ENCODE measurements at regions of chr1 and their contacts with region 1.

Region 1: DNA sequence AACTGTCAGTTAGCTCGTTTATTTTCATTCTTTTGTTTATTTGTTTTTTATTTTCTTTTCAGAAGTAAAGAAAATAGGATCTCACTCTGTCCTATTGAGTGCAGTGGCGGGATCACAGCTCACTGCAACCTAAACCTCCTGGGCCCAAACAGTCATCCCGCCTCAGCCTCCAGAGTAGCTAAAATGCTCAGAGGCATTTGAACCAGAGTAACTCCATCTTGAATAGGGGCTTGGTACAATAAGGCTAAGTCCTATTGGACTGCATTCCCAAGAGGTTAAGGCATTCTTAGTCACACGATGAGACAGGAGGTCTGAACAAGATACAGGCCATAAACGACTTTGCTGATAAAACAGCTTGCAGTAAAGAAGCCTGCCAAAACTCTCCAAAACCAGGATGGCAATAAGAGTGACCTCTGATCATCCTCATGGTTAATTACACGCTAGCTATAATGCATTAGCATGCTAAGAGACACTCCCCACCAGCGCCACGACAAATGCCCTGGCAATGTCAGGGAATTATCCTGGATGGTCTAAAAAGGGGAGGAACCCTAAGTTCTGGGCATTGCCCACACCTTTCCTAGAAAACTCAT is 13.1 kb upstream of the COP1 start:
- DNase-seq: no peak
- ATAC-seq: no peak
- H3K4me3 ChIP-seq: no peak overlapping the region
- H3K27ac ChIP-seq: no peak overlapping the region
- H3K4me1 ChIP-seq: no peaks in the 10 kb centered on the region
- CTCF ChIP-seq: no peak
- EP300 ChIP-seq: no peak
- POLR2A ChIP-seq: no peak
- RAD21 ChIP-seq: no peak

Region 2: GRCh38 chr1:176174108-176174507 is 46.1 kb before region 1 on chr1:
- CTCF ChIA-PET with region 1: no interaction called
- POLR2A ChIA-PET with region 1: no interaction called
- DNase-seq: no peak
- ATAC-seq: no peak
- H3K4me3 ChIP-seq: no peak overlapping the region
- H3K27ac ChIP-seq: no peak overlapping the region
- H3K4me1 ChIP-seq: no peaks in the 10 kb centered on the region
- CTCF ChIP-seq: no peak
- EP300 ChIP-seq: no peak
- POLR2A ChIP-seq: no peak
- RAD21 ChIP-seq: no peak

Region 3: DNA sequence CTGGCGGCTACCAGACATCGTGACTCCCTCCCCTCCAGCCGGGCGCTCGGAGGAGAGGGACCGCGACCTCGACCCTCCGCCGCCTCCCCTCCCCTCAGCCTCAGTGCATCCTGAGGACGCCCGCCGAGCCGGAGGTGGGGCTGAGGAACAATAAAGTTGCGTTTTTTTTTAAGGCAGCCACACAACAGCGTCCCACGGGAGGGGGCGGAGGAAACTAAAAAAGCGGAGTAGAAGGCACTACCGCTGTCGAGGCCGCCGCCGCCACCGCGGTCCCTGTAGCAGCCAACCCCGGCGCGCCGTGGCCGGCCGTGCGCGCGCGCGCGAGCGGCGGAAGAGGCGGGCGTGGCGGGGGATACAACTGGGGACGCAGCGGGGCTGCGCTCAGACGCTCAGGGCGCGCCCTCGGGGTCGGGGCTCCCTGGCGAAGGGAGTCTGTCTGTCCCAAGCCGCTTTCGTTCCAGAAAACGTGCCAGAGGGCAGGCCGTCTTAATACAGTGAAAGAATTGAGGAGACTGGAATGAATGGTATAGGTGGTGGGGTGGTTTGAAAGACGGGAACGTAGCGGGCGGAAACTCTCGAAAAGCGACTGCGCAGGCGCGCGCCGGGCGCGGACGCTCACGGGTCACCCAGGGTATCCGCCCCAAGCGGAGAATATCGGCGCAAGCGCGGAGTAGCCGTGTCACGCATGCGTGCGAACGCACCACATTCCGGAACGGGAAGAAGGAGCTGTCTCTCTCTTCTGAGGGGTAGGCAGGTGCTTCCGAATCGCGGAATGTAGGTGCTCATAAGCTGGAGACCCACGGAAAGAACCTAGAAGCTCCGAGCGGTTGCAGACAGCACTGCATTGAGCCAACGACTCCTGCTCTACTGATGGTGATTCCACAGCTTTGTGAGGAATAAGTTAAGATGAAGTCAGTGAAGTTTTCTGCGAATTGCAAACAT is 13.0 kb before region 1 on chr1 and contains the start of gene COP1:
- CTCF ChIA-PET with region 1: interaction called, 4 read pairs
- POLR2A ChIA-PET with region 1: interaction called, 12 read pairs
- DNase-seq: peak; percentile 95 to 97
- ATAC-seq: peak; percentile 93 to 94
- H3K4me3 ChIP-seq: peak within 1 kb of the TSS; percentile 86
- H3K27ac ChIP-seq: peak within 1 kb of the TSS; percentile 92 to 96
- H3K4me1 ChIP-seq: peaks cover 17% of the 10 kb centered on the region; the same call in 2 of the 3 replicates
- CTCF ChIP-seq: no peak
- EP300 ChIP-seq: no peak
- POLR2A ChIP-seq: peak; percentile 78
- RAD21 ChIP-seq: no peak
- polyA plus RNA-seq, gene COP1: 37.9 and 42.0 TPM in 2 replicates